Naive thymus-derived CD8-positive, alpha-beta T cell (primary cell): ENCODE measurements at regions of chr16 and their contacts with region 1.

Region 1: GRCh38 chr16:81469710-81470535 is 25.3 kb downstream of the CMIP start:
- DNase-seq: peak in 8 of 10 donors; percentile 9 to 77 (median 54)
- ATAC-seq: peak; percentile 97 to 98
- H3K4me3 Mint-ChIP-seq: peak overlapping the region; percentile 60 to 89 (median 77)
- H3K27ac Mint-ChIP-seq: peak overlapping the region; percentile 87 to 96 (median 94)
- H3K4me1 Mint-ChIP-seq: peaks cover 44 to 89% (median 83%) of the 10 kb centered on the region in 4 donors
- H3K27me3 Mint-ChIP-seq: no peaks in the 10 kb centered on the region

Region 2: DNA sequence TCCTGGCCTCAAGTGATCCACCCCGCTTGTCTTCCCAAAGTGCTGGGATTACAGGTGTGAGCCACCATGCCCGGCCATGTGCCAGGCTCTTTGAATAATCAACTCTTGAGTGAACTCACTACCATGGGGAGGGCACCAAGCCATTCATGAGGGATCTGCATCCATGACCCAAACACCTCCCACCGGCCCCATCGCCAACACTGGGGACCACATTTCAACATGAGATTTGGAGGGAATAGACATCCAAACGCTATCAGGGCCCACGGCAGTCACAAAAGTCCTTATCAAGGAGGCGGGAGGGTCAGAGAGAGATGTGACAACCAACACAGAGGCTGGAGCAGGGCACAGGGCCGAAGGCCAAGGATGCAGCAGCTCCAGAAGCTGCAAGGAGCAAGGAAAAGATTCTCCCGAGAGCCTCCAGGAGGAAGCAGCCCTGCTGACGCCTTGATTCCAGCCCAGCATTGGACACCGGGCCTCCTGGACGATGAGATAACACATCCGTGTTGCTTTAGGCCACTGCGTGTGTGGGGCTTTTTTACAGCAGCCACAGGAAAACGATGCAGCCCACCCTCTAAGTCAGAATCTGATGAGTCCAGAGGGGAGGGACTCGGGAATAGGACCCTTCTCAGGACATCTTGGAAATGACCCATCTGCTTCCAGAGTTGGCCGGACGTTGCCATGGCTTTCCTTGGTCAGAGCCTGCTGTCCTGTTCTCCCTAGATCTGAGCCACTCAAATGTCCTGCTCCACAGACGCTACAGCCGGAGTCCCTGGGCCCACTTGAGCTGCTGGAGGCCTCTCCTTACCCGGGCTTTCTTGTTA is 72.7 kb before region 1 on chr16:
- POLR2A ChIA-PET with region 1: no interaction called
- DNase-seq: no peak
- ATAC-seq: no peak
- H3K4me3 Mint-ChIP-seq: no peak overlapping the region
- H3K27ac Mint-ChIP-seq: no peak overlapping the region
- H3K4me1 Mint-ChIP-seq: no peaks in the 10 kb centered on the region
- H3K27me3 Mint-ChIP-seq: no peaks in the 10 kb centered on the region

Region 3: DNA sequence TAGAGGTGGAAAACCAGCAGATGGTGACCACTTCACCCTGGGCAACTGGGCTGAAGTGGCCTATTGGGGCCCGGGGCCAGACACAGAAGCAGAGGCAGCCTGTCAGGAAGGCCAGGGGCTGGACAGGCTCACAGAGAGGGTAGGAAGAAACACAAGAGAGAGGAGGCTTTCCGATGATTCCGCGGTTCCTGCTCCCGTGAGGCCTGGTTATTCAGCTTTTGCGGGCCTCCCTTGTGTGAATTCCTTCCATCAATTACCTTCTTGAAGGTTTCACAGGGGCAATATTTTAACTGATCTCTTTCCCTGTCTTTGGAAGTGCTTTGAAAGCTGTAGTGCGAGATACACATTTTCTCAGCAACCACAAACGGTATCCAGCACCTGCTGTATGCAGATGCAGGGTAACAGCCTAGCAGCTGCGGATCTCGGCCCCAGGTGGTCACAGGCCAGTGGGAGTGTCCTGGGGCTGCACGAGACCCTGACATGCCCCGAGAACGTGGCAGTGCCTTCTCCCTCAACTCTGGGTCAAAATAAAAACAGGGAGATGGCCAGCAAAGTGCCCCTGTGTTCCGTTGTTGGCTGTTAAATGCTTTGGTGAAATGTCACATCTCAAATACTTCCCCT is 36.9 kb before region 1 on chr16:
- POLR2A ChIA-PET with region 1: no interaction called
- DNase-seq: no peak
- ATAC-seq: no peak
- H3K4me3 Mint-ChIP-seq: peak overlapping the region in 1 of 10 donors; percentile 7
- H3K27ac Mint-ChIP-seq: peak overlapping the region in 1 of 10 donors; percentile 5
- H3K4me1 Mint-ChIP-seq: peaks cover 2 to 14% (median 4%) of the 10 kb centered on the region in 4 donors
- H3K27me3 Mint-ChIP-seq: peaks cover 0 to 5% (median 2%) of the 10 kb centered on the region in 5 donors

Region 4: DNA sequence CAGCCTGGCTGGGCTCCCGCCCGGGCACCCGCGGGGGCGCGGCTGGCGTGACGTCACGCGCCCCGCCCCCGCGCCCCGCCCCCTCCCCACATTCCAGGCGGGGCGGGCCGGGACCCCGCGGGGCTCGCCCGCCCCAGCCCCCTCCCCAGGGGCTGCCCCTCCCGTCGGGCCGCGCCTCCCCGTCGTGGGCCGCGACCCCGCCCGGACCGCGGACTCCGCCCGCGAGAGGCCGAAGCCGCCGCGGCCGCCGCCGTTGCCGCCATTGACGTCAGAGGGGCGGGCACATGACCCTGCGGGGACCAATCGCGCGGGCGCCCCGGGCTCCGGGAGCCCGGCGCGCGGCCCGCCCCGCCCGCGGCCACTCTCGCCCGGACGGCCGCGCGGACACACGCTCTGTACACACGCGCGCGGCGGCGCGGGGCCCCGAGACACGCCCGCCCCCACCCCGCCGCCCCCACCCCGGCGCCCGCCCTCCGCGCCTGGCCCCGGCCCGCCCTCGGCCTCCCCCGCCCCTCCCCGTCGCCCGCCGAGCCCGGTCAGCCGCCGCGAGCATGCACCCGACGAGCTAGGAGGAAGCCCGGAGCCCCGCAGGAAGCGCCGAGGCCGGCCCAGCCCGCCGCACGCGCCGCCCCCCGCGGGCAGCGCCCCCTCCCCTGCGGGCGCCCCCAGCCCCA is 25.3 kb before region 1 on chr16 and contains the start of gene CMIP:
- POLR2A ChIA-PET with region 1: interaction called, 24 read pairs
- DNase-seq: peak; percentile 58 to 89 (median 78)
- ATAC-seq: peak; percentile 68 to 71
- H3K4me3 Mint-ChIP-seq: peak within 1 kb of the TSS; percentile 82 to 97 (median 92)
- H3K27ac Mint-ChIP-seq: peak within 1 kb of the TSS; percentile 86 to 97 (median 96)
- H3K4me1 Mint-ChIP-seq: peaks cover 28 to 56% (median 51%) of the 10 kb centered on the region in 4 donors
- H3K27me3 Mint-ChIP-seq: no peaks in the 10 kb centered on the region
- polyA plus RNA-seq, gene CMIP: 0.31 to 1.3 (median 0.65) TPM

Region 5: DNA sequence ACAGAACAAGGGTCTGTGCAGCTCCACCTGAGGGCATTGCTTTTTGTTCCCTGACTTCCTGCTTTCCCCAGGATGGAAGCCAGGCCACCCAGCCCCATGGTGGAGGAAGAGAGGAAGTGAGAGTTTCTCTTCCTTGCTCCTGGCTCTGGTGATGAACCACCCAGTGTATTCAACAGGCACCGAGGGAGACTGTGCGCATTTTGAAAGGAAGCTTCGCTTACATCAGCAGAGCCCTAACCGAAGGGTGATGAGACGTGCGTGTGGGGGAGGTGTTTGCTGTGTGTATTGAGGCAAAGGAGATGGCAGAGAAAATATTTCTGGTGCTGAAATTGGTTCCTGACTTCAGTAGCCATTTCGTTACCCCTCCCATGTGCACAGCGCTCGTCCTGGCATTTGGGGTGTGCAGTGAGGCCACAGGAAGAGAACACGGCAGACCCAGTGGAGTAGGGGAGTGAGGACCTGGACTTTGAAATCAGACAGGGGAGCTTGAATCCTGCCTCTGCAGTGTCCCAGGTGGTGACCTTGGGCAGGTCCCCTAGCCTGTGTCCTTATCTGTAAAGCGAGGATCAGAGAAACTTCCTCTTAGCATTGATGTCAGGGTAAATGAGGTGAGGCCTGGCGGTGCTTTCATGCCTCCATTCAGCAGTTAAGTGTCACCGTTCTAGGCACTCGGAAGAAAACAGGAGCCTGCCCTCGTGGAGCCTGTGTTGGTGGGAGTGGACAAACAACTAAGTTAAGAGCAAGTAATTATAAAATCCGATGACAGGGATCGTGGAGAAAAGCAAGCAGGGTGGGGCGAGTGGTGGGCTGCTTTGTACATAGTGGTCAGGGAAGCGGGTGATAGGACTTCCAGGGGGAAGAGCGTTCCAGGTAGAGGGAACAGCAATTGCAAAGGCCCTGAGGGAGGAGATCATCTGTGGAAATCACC is 17.9 kb before region 1 on chr16:
- POLR2A ChIA-PET with region 1: interaction called, 24 read pairs
- DNase-seq: peak in 7 of 10 donors; percentile 21 to 72 (median 65)
- ATAC-seq: peak; percentile 82 to 94
- H3K4me3 Mint-ChIP-seq: peak overlapping the region; percentile 46 to 87 (median 78)
- H3K27ac Mint-ChIP-seq: peak overlapping the region; percentile 87 to 98 (median 90)
- H3K4me1 Mint-ChIP-seq: peaks cover 55 to 90% (median 83%) of the 10 kb centered on the region in 4 donors
- H3K27me3 Mint-ChIP-seq: no peaks in the 10 kb centered on the region

Region 6: GRCh38 chr16:81493755-81494433 is 24.0 kb after region 1 on chr16:
- POLR2A ChIA-PET with region 1: no interaction called
- DNase-seq: peak in 1 of 10 donors; percentile 17
- ATAC-seq: peak in 1 of 2 donors; percentile 33
- H3K4me3 Mint-ChIP-seq: peak overlapping the region in 1 of 10 donors; percentile 6
- H3K27ac Mint-ChIP-seq: peak overlapping the region in 2 of 10 donors; percentile 48 to 54
- H3K4me1 Mint-ChIP-seq: peaks cover 30 to 79% (median 63%) of the 10 kb centered on the region in 4 donors
- H3K27me3 Mint-ChIP-seq: no peaks in the 10 kb centered on the region

Region 7: GRCh38 chr16:81537721-81538561 is 68.0 kb after region 1 on chr16:
- POLR2A ChIA-PET with region 1: no interaction called
- DNase-seq: no peak
- ATAC-seq: no peak
- H3K4me3 Mint-ChIP-seq: no peak overlapping the region
- H3K27ac Mint-ChIP-seq: peak overlapping the region in 2 of 10 donors; percentile 15 to 58
- H3K4me1 Mint-ChIP-seq: peaks cover 14 to 45% (median 34%) of the 10 kb centered on the region in 4 donors
- H3K27me3 Mint-ChIP-seq: no peaks in the 10 kb centered on the region